ENCODE measurements at regions of chr9 and their contacts with region 1.

Region 1: GRCh38 chr9:100598641-100599145 is 20.8 kb downstream of the CAVIN4 start:
- DNase-seq: peak; percentile 92
- H3K4me3 ChIP-seq: peak overlapping the region; percentile 90
- H3K27ac ChIP-seq: no peak overlapping the region
- H3K4me1 ChIP-seq: no peaks in the 10 kb centered on the region
- H3K27me3 ChIP-seq: no peaks in the 10 kb centered on the region

Region 2: GRCh38 chr9:100028201-100028784 is 570.4 kb before region 1 on chr9:
- in situ Hi-C with region 1: loop called (anchors 25 kb)
- DNase-seq: peak; percentile 78
- H3K4me3 ChIP-seq: no peak overlapping the region
- H3K27ac ChIP-seq: no peak overlapping the region
- H3K4me1 ChIP-seq: no peaks in the 10 kb centered on the region
- H3K27me3 ChIP-seq: no peaks in the 10 kb centered on the region

Region 3: GRCh38 chr9:100277166-100277979 is 321.3 kb before region 1 on chr9:
- in situ Hi-C with region 1: no loop called
- DNase-seq: peak; percentile 92
- H3K4me3 ChIP-seq: no peak overlapping the region
- H3K27ac ChIP-seq: peak overlapping the region; percentile 39
- H3K4me1 ChIP-seq: peaks cover 13% of the 10 kb centered on the region
- H3K27me3 ChIP-seq: no peaks in the 10 kb centered on the region

Region 4: GRCh38 chr9:100324594-100325200 is 274.0 kb before region 1 on chr9:
- in situ Hi-C with region 1: loop called (anchors 25 kb)
- DNase-seq: peak; percentile 74
- H3K4me3 ChIP-seq: no peak overlapping the region
- H3K27ac ChIP-seq: no peak overlapping the region
- H3K4me1 ChIP-seq: no peaks in the 10 kb centered on the region
- H3K27me3 ChIP-seq: no peaks in the 10 kb centered on the region

Region 5: GRCh38 chr9:101307051-101307450 is 708.4 kb after region 1 on chr9:
- in situ Hi-C with region 1: loop called (anchors 10 kb)
- DNase-seq: no peak
- H3K4me3 ChIP-seq: no peak overlapping the region
- H3K27ac ChIP-seq: no peak overlapping the region
- H3K4me1 ChIP-seq: no peaks in the 10 kb centered on the region
- H3K27me3 ChIP-seq: peaks cover 49% of the 10 kb centered on the region